Heart left ventricle (tissue), 16 donors: ENCODE measurements at regions of chrX and their contacts with region 1.

Region 1: GRCh38 chrX:41561045-41561444 is 113.9 kb downstream of the NYX start:
- DNase-seq: peak in 2 of 5 donors; percentile 19 to 27
- ATAC-seq: peak in 3 of 4 donors; percentile 86 to 88 (median 87)
- H3K4me3 ChIP-seq: no peak overlapping the region
- H3K27ac ChIP-seq: peak overlapping the region in 7 of 12 donors; percentile 12 to 74 (median 57)
- H3K4me1 ChIP-seq: peaks cover 0 to 37% (median 2%) of the 10 kb centered on the region in 12 donors
- H3K27me3 ChIP-seq: no peaks in the 10 kb centered on the region
- CTCF ChIP-seq: no peak
- POLR2A ChIP-seq: no peak

Region 2: GRCh38 chrX:41441934-41442823 is 118.9 kb before region 1 on chrX:
- intact Hi-C with region 1: no loop called
- DNase-seq: peak; percentile 74 to 91 (median 86)
- ATAC-seq: peak; percentile 92 to 95 (median 94)
- H3K4me3 ChIP-seq: peak overlapping the region in 10 of 12 donors; percentile 33 to 54 (median 44)
- H3K27ac ChIP-seq: peak overlapping the region; percentile 41 to 89 (median 67)
- H3K4me1 ChIP-seq: peaks cover 0 to 12% (median 2%) of the 10 kb centered on the region in 12 donors
- H3K27me3 ChIP-seq: peaks cover 0 to 12% (median 0%) of the 10 kb centered on the region in 9 donors
- CTCF ChIP-seq: peak; percentile 49 to 79 (median 59)
- POLR2A ChIP-seq: peak in 1 of 2 donors; percentile 44

Region 3: DNA sequence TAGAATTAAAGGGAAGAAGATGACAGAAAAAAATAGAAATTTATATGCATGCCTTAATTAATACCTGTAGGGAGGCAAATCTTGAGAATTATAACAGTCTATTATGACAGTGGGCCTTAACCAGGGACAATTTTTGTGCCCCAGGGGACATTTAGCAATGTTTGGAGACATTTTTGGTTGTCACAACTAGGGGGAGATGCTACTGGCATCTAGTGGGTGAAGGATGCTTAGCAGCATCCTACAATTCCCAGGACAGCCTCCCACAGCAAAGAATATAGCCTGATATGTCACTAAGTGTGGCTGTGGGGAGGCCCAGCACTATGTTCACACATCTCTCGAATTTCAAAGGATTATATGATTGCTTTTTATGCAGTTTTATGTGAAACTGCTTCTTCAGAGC is 173.5 kb after region 1 on chrX:
- intact Hi-C with region 1: loop called in 1 of 10 experiments (anchors 10 kb)
- DNase-seq: no peak
- ATAC-seq: peak in 2 of 4 donors; percentile 42 to 56
- H3K4me3 ChIP-seq: no peak overlapping the region
- H3K27ac ChIP-seq: peak overlapping the region in 1 of 12 donors; percentile 24
- H3K4me1 ChIP-seq: peaks cover 0 to 13% (median 0%) of the 10 kb centered on the region in 12 donors
- H3K27me3 ChIP-seq: peaks cover 0 to 5% (median 0%) of the 10 kb centered on the region in 9 donors
- CTCF ChIP-seq: peak in 10 of 12 donors; percentile 21 to 53 (median 36)
- POLR2A ChIP-seq: no peak

Region 4: GRCh38 chrX:41739871-41740270 is 178.8 kb after region 1 on chrX:
- intact Hi-C with region 1: loop called in 2 of 10 experiments (anchors 10 kb)
- DNase-seq: no peak
- ATAC-seq: no peak
- H3K4me3 ChIP-seq: no peak overlapping the region
- H3K27ac ChIP-seq: no peak overlapping the region
- H3K4me1 ChIP-seq: peaks cover 0 to under 1% (median 0%) of the 10 kb centered on the region in 12 donors
- H3K27me3 ChIP-seq: no peaks in the 10 kb centered on the region
- CTCF ChIP-seq: no peak
- POLR2A ChIP-seq: no peak

Region 5: GRCh38 chrX:41759817-41760216 is 198.8 kb after region 1 on chrX:
- intact Hi-C with region 1: loop called in 3 of 10 experiments (anchors 10 kb)
- DNase-seq: no peak
- ATAC-seq: no peak
- H3K4me3 ChIP-seq: no peak overlapping the region
- H3K27ac ChIP-seq: no peak overlapping the region
- H3K4me1 ChIP-seq: no peaks in the 10 kb centered on the region
- H3K27me3 ChIP-seq: no peaks in the 10 kb centered on the region
- CTCF ChIP-seq: peak; percentile 15 to 60 (median 45)
- POLR2A ChIP-seq: no peak

Region 6: DNA sequence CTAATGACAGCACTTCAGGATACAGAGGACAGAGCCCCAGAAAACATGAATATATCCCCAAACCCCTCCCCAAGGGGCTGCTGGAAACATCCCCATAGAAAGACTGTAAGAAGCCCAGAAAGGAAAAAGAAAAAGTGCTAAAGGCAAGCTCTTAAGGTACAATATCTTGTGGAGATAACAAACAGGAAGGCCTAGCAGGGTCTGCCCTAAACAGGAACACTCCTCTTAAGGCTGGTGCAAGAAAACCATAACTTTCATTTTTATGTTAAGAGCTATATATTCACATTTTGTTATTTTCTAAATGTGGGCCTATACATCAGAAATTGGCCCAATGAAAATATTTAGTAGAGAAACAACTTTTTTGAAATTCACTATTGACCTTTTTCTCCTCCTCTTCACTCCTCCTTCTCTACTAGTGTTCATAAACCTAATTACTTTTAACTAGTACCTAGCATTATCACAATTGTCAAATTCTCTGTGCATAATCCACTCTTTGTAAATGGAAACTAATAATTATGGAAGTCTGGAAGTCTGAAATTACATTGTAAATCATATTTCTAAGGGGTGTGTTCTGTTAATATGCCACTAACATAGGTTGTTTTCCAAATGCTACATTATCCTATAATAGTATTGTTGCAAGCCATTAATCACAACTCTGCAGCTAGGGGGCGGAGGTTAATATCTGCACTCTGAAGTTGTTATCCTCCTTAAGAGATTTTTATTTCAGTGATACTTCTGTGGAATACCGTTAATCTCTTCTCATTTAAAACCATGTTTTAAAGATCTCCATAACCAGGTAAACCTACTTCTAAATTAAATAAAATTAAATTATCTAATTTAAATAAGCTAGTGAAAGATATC is 302.5 kb after region 1 on chrX:
- intact Hi-C with region 1: no loop called
- DNase-seq: no peak
- ATAC-seq: no peak
- H3K4me3 ChIP-seq: no peak overlapping the region
- H3K27ac ChIP-seq: no peak overlapping the region
- H3K4me1 ChIP-seq: peaks cover 0 to 6% (median 0%) of the 10 kb centered on the region in 12 donors
- H3K27me3 ChIP-seq: peaks cover 0 to 7% (median 0%) of the 10 kb centered on the region in 9 donors
- CTCF ChIP-seq: no peak
- POLR2A ChIP-seq: no peak